ENCODE measurements at regions of chr12 and their contacts with region 1.

Region 1: DNA sequence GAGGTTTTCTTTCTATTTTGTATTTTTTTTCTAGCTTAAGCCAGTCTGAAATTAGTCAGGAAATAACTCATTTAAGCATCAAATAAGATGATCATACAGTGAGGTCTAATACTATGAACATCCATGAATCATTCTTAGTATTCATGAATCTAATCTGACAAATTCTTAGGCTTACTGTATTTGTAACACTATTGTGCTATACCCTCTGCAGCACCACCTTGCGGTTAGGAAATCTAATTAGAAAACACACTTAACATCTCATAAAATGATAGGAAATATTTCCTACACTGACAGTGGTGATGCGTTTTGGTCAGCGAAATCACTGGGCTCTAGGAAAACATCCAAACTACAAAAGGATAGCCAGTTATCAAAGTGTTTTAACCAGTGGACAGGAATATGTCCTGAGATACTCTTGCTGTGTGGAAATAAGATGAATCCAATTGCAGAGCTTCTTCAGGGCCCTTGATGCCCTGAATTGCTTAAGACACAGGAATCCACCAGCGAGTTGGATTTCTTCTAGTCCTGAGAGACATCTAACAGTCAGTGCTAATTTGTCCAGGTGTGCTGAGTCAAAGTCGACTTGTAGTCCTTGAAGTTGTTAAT is 109.3 kb upstream of the MYF6 start:
- DNase-seq: peak; percentile 53
- H3K4me3 ChIP-seq: no peak overlapping the region
- H3K27ac ChIP-seq: no peak overlapping the region
- H3K4me1 ChIP-seq: peaks cover 4% of the 10 kb centered on the region
- H3K27me3 ChIP-seq: no peaks in the 10 kb centered on the region
- CTCF ChIP-seq: peak; percentile 49 to 64

Region 2: DNA sequence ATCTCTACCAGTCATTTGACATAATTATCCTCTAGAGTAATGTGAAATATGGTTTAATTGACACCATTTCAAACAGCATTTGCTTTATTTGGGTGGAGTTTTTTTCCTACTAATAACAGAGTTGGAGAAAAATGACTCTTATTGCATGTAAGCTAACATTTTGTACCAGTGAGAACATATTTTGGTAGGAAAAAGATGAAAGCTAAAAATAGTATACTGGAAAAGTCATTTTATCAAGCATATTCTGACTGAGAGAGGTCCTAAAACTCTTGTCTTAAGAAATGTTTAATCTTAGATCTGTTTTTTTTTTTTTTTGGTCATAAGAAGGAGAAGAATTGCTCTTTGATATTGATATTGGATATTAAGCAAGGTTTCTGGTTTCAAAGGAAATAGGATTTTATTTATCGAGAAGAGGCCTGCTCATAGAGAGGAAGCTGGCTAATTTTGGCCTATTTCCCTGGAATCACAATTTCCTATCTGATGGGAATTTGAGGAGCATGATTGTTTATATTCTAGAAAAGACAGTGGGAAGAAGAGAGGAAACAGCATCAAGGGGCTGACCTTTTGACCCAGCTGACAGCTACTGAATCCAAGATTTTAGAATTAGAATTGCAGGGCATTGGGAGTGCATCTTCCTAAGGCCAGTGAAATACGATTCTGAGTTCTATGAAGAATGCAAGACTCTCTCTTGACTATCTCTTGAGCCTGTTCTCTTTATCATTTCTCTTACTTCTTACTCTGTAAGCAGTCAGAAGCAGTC is 479.4 kb before region 1 on chr12:
- CTCF ChIA-PET with region 1: no interaction called
- dilution Hi-C with region 1: no loop called
- in situ Hi-C with region 1: no loop called
- intact Hi-C with region 1: no loop called
- DNase-seq: no peak
- H3K4me3 ChIP-seq: no peak overlapping the region
- H3K27ac ChIP-seq: no peak overlapping the region
- H3K4me1 ChIP-seq: no peaks in the 10 kb centered on the region
- H3K27me3 ChIP-seq: no peaks in the 10 kb centered on the region
- CTCF ChIP-seq: no peak

Region 3: GRCh38 chr12:80490344-80490743 is 107.8 kb before region 1 on chr12:
- CTCF ChIA-PET with region 1: no interaction called
- dilution Hi-C with region 1: no loop called
- in situ Hi-C with region 1: loop called in 1 of 2 experiments (anchors 10 kb)
- intact Hi-C with region 1: no loop called
- DNase-seq: no peak
- H3K4me3 ChIP-seq: no peak overlapping the region
- H3K27ac ChIP-seq: no peak overlapping the region
- H3K4me1 ChIP-seq: no peaks in the 10 kb centered on the region
- H3K27me3 ChIP-seq: no peaks in the 10 kb centered on the region
- CTCF ChIP-seq: no peak

Region 4: DNA sequence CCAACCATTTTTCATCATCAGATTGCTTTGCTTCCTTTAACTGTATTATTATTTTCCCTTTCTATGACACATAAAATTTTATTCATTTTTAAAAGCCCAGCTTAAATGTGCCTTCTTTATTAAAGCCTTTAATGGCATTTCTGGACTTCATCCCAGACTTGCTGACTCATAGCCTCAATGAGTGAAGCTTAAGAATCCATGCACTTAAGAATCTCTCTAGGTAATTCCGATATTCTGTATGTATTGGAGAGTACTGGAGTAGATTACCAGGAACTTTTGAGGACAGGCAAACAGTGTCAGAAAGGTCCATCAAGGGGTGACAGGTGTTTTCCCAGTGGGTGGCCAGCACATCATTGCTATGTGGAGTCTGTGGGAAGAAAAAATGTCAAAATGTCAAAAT is 46.2 kb before region 1 on chr12:
- CTCF ChIA-PET with region 1: no interaction called
- dilution Hi-C with region 1: no loop called
- in situ Hi-C with region 1: no loop called
- intact Hi-C with region 1: loop called (anchors 5 kb)
- DNase-seq: peak; percentile 89
- H3K4me3 ChIP-seq: no peak overlapping the region
- H3K27ac ChIP-seq: no peak overlapping the region
- H3K4me1 ChIP-seq: peaks cover 13% of the 10 kb centered on the region
- H3K27me3 ChIP-seq: no peaks in the 10 kb centered on the region
- CTCF ChIP-seq: no peak

Region 5: DNA sequence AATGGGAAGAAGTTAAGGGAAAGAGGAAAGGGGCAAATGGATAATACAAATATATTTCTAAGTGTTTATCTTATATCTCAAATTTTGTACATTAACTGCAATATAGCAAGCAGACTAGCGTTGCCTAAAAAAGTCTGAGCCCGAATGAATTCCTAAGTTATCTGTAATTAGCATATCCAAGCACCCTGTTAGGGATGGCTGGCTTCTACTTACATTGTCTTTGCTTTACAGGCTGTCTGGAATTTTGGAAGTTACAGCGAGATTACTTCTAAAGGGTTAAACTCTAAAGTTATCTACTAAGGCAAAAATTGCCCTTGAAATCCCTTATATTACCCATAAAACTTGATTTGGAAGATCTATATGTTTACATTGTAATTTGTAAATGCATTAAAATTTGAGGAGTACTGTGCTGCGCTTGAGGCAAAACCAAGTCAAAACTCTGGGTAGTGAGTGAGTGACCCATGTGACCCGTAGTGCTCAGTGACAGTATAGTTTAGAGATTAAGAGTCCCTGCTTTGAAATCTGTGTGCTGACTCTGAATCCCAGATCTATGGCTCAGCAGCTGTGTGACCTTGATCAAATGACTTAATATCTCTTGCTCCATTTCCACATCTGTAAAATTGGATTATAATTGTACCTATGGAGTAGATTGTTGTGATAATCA is 356.9 kb after region 1 on chr12:
- CTCF ChIA-PET with region 1: no interaction called
- dilution Hi-C with region 1: no loop called
- in situ Hi-C with region 1: no loop called
- intact Hi-C with region 1: no loop called
- DNase-seq: no peak
- H3K4me3 ChIP-seq: no peak overlapping the region
- H3K27ac ChIP-seq: no peak overlapping the region
- H3K4me1 ChIP-seq: no peaks in the 10 kb centered on the region
- H3K27me3 ChIP-seq: peaks cover 2% of the 10 kb centered on the region
- CTCF ChIP-seq: no peak

Measured in mammary epithelial cell (primary cell).